ENCODE measurements at regions of chr11 and their contacts with region 1.

Region 1: DNA sequence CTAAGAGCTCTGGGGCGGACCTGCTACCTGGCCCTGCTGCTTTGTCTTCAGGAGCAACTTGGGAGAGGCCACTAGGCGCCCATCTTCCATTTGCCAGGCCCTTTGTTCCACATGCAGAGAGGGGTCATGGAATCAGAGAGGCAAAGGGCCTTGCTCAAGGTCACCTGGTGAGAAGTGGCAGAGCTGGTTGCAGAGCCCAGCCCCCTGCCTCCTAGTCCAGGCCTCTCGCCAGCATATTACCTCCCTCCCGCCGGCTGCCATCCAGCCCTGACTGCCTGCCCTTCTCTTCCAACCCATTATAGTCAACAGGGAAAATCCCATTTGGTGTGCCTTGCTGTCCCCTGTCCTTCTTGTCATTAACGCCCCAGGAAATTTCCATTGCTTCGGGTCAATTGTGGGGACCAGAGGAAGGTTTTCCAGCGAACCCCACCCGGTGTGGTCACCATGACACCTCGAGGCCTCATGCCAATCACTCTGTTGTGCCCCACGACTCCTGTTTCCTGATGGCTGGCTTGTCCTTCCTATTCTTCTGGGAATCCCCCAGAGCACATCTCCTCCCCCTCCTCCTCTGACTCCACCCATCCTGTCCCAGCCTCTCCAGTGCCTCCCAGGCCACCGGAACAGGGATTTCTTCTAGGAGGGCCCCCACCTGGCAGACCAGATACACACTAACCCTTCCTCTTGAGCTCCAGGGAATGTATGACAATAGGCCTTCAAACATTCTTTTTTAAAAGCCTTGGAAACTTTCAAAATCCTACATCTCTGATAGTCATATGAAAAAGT is 77.0 kb downstream of the NECTIN1 start:
- DNase-seq: no peak
- H3K4me3 ChIP-seq: no peak overlapping the region
- H3K4me1 ChIP-seq: no peaks in the 10 kb centered on the region
- H3K27me3 ChIP-seq: no peaks in the 10 kb centered on the region

Region 2: GRCh38 chr11:119421941-119422808 is 229.8 kb before region 1 on chr11:
- in situ Hi-C with region 1: no loop called
- DNase-seq: peak in 1 of 2 experiments; percentile 46
- H3K4me3 ChIP-seq: peak overlapping the region; percentile 19
- H3K4me1 ChIP-seq: no peaks in the 10 kb centered on the region
- H3K27me3 ChIP-seq: peaks cover 19% of the 10 kb centered on the region

Region 3: DNA sequence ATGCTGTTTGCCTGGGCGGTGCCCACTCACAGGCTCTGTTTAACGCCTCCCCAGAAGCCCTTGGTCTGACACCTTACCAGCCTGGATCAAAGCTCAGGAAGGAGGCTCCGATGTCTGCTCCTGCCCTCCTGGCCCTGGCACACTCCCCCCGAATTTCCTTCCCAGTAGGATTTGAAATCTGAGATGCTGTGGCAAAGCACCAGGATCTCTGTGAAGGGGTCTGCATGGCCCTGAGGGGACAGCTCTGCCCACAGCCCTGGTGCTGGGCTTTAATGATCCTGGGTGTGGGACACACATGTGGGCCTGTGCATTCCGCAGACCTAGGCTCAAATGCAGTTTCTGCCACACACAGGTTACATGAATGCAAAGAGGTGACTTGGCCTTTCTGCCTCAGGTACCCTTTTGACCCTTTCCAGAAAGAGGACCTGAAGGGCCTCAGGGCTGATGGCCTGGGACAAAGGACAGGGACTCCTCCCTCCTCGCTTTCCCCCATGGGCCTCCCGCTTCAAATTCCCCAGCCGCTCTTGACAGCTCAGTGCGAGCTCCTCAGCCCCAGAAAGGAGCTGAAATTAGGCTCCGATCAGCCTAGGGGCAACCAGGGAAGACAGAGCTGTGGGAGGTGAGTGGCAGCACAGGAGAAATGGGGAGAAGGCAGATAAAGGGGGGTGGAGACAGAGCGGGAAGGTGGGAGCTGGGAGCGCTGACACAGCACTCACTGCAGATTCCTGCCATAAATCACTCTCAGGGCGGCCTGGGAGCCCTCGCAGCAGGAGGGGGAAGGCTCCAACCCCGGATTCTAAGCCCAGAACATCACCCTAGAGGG is 444.6 kb after region 1 on chr11:
- in situ Hi-C with region 1: loop called (anchors 10 kb)
- DNase-seq: peak in 1 of 2 experiments; percentile 21
- H3K4me3 ChIP-seq: no peak overlapping the region
- H3K4me1 ChIP-seq: no peaks in the 10 kb centered on the region
- H3K27me3 ChIP-seq: peaks cover 6% of the 10 kb centered on the region